ENCODE measurements at regions of chr4 and their contacts with region 1.

Region 1: DNA sequence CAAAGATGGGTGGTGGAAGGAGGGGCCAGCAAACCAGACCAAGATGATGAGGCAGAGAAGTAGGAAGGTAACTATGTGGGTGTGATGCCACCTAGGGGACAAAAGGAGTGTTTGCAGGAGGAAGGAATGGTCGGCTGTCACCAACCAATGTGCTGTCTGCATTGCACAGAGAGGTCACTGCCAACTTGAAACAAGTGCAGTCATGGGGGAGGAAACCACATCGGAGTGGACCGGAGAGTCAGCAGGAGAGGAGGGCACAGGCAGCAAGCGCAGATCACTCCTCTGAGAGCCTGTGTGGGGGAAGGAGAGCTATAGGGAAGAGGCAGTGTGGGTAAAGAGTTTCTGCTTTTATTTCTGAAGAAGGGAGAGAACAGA is 38.5 kb upstream of the FGFBP2 start:
- DNase-seq: peak; percentile 37
- ATAC-seq: peak; percentile 97

Region 2: GRCh38 chr4:15805583-15806517 is 195.6 kb before region 1 on chr4:
- intact Hi-C with region 1: loop called (anchors 5 kb)
- DNase-seq: no peak
- ATAC-seq: peak; percentile 69

Region 3: GRCh38 chr4:15882675-15883086 is 118.8 kb before region 1 on chr4:
- intact Hi-C with region 1: loop called (anchors 2 kb)
- DNase-seq: no peak
- ATAC-seq: peak; percentile 87

Region 4: DNA sequence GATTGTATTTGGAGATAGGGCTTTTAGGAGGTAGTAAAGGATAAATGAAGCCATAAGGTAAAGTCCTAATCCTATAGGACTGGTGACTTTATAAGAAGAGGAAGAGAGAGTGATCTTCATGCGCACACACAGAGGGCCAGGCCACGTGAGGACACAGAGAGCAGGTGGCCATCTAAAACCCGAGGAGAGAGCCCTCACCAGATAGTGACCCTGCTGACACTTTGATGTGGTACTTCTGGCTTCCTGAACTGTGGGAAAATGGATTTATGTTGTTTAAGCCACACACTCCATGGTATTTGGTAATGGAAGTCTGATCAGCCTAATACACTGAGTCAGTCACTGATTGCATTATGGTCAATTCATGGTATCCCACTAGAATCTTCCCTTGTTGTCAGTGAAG is 389.7 kb after region 1 on chr4:
- intact Hi-C with region 1: no loop called
- DNase-seq: no peak
- ATAC-seq: no peak